ENCODE measurements at regions of chr4 and their contacts with region 1.

Region 1: DNA sequence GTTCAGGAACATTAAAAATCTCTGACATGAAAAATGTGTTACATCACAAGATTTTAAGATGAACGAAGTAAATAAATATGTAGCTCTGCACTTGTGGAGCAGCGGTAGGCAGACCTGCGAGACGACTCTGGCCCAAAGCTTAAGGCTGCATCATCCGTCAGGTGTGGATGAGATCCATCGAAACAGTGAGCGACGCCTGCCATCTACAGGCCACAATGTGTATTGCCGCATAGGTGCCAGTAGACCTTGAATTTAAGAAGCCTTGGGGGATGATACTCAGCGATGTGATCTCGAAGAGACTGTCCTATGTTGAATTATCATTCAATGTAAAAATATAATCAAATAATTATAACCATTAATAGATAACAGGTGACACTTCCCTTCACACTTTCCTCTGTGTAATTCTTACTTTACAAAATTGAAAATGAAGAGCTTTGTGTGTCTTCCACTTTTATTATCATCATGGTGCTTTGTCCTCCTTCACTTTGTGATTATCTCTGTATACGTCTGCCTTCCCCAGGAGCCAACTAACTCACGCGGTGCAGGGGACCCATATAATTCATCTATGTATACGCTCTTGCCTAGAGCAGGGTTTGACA is 851.0 kb downstream of the RAB28 start:
- DNase-seq: peak; percentile 74
- ATAC-seq: peak; percentile 76
- H3K4me3 ChIP-seq: no peak overlapping the region
- H3K4me3 Mint-ChIP-seq: no peak overlapping the region
- H3K27ac ChIP-seq: no peak overlapping the region
- H3K27ac Mint-ChIP-seq: no peak overlapping the region
- H3K4me1 ChIP-seq: no peaks in the 10 kb centered on the region
- H3K4me1 Mint-ChIP-seq: no peaks in the 10 kb centered on the region
- H3K27me3 ChIP-seq: no peaks in the 10 kb centered on the region
- H3K27me3 Mint-ChIP-seq: peaks cover 13% of the 10 kb centered on the region
- CTCF ChIP-seq: peak; percentile 97

Region 2: DNA sequence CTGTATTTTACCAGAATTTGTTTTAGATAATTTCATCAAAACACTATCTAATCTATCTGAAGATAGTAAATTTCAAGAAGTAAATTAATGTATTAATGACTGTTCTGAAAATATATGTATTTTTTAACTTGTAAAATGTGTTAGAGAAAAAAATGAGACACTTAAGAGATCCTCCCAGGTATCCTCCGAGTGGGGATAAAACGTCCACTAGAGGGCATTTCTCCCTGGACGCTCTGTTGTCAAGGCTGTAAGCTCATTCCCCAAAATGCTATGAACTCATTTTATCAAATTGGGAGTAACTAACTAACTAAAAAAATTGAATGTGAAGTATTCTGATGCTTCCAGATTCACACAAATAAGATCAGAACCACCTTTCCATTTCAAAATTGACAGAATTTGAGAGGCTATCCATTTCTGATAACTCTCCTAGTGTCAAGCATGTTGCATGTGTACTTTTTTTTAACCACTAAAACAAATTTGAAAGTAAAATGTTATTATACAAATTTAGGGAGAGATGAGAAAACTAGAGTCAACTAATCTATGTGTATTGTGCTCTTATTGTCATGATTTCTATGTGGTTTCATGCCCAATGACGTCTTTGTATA is 867.2 kb before region 1 on chr4:
- CTCF ChIA-PET with region 1: interaction called, 5 read pairs
- POLR2A ChIA-PET with region 1: no interaction called
- intact Hi-C with region 1: loop called (anchors 10 kb)
- DNase-seq: peak; percentile 23
- ATAC-seq: no peak
- H3K4me3 ChIP-seq: no peak overlapping the region
- H3K4me3 Mint-ChIP-seq: no peak overlapping the region
- H3K27ac ChIP-seq: no peak overlapping the region
- H3K27ac Mint-ChIP-seq: no peak overlapping the region
- H3K4me1 ChIP-seq: no peaks in the 10 kb centered on the region
- H3K4me1 Mint-ChIP-seq: no peaks in the 10 kb centered on the region
- H3K27me3 ChIP-seq: no peaks in the 10 kb centered on the region
- H3K27me3 Mint-ChIP-seq: no peaks in the 10 kb centered on the region
- CTCF ChIP-seq: peak; percentile 77

Region 3: DNA sequence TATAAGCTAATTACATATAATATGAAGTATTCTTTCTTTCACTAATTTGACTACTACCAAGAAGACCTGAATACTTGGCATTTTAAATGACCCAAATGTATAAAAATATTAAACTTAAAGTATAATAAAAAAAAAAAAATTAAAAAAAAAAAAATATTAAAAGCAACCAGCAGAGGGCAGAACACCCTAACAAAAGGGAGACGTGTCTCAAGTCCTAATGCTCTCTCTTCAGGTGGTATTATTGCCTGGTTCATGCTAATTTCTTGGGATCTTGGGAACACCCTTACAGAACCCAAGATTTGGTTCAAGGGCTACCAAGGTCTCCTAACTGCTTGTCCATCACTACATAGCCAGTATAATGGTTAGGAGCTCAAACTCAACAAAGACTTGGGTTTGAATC is 96.2 kb after region 1 on chr4:
- CTCF ChIA-PET with region 1: no interaction called
- POLR2A ChIA-PET with region 1: no interaction called
- intact Hi-C with region 1: no loop called
- DNase-seq: peak; percentile 22
- ATAC-seq: no peak
- H3K4me3 ChIP-seq: no peak overlapping the region
- H3K4me3 Mint-ChIP-seq: no peak overlapping the region
- H3K27ac ChIP-seq: no peak overlapping the region
- H3K27ac Mint-ChIP-seq: no peak overlapping the region
- H3K4me1 ChIP-seq: no peaks in the 10 kb centered on the region
- H3K4me1 Mint-ChIP-seq: peaks cover 2% of the 10 kb centered on the region
- H3K27me3 ChIP-seq: no peaks in the 10 kb centered on the region
- H3K27me3 Mint-ChIP-seq: peaks cover 16% of the 10 kb centered on the region
- CTCF ChIP-seq: peak; percentile 73

Measured in B cell (primary cell).